GM10248 (cell line): ENCODE measurements at regions of chr13 and their contacts with region 1.

Region 1: DNA sequence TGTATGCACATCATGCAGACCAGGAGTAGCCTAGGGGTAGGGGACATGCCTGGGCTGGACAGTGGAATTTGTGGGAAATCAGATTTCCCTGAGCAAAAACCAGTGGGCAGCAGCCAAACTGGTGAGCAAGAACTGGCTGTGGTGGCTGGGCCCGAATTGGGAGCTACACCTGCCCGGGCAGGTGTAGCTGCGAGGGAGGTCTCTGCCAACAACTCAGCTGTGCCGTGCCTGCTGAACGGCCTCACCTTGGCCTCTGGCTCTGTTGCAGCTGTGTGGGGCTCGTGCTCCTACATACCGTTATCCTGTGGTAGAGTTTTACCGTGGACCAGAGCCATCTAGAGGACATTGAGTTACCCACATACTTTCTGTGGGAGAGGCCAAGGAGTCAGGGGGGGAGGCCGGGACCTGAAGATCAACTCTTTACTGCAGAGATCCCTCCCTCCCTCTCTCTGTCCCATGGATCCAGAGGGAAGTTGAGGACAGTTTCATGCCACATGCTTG is 113.2 kb downstream of the TM9SF2 start:
- DNase-seq: peak; percentile 59
- CTCF ChIP-seq: peak; percentile 36

Region 2: GRCh38 chr13:99258210-99258860 is 356.1 kb before region 1 on chr13 and contains the start of gene GPR18:
- CTCF ChIA-PET with region 1: no interaction called
- POLR2A ChIA-PET with region 1: no interaction called
- DNase-seq: peak; percentile 56
- CTCF ChIP-seq: no peak

Region 3: DNA sequence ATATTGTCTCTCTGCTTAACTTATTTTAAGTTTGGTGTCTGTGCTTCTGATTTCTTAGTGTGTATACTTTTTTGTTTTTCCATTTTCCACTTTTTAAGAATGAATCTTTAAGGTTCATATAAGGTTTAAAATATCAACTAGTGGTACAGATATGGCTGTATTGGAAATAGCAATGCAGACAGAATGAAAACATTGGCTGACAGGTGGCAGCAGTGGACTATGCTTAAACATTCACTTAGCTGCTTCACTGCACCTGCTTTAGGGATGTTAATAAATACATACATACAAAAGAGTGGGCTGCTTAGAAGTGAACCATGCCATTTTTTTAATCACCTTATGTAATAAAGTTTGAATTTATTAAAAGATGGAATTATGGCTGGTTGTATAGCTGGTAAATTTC is 85.9 kb before region 1 on chr13:
- CTCF ChIA-PET with region 1: interaction called, 19 read pairs
- POLR2A ChIA-PET with region 1: no interaction called
- DNase-seq: peak; percentile 47
- CTCF ChIP-seq: peak; percentile 45

Region 4: GRCh38 chr13:99980201-99980823 is 365.9 kb after region 1 on chr13:
- CTCF ChIA-PET with region 1: no interaction called
- POLR2A ChIA-PET with region 1: no interaction called
- DNase-seq: peak; percentile 70
- CTCF ChIP-seq: no peak